Natural killer cell (primary cell): ENCODE measurements at regions of chrX and their contacts with region 1.

Region 1: GRCh38 chrX:115330498-115331168 is 41.1 kb downstream of the LUZP4 start:
- DNase-seq: peak in 1 of 2 donors; percentile 42
- ATAC-seq: peak in 1 of 3 donors; percentile 58
- H3K4me3 ChIP-seq: no peak overlapping the region
- H3K4me3 Mint-ChIP-seq: no peak overlapping the region
- H3K27ac ChIP-seq: no peak overlapping the region
- H3K27ac Mint-ChIP-seq: no peak overlapping the region
- H3K4me1 ChIP-seq: no peaks in the 10 kb centered on the region
- H3K4me1 Mint-ChIP-seq: peaks cover 0 to 5% of the 10 kb centered on the region in 2 donors
- H3K27me3 ChIP-seq: no peaks in the 10 kb centered on the region
- H3K27me3 Mint-ChIP-seq: peaks cover 3 to 40% of the 10 kb centered on the region in 2 donors
- CTCF ChIP-seq: peak; percentile 68

Region 2: GRCh38 chrX:114985967-114986592 is 344.6 kb before region 1 on chrX:
- intact Hi-C with region 1: no loop called
- DNase-seq: no peak
- ATAC-seq: peak in 2 of 3 donors; percentile 78 to 89
- H3K4me3 ChIP-seq: no peak overlapping the region
- H3K4me3 Mint-ChIP-seq: peak overlapping the region; percentile 15
- H3K27ac ChIP-seq: peak overlapping the region; percentile 38
- H3K27ac Mint-ChIP-seq: peak overlapping the region; percentile 81 to 89
- H3K4me1 ChIP-seq: no peaks in the 10 kb centered on the region
- H3K4me1 Mint-ChIP-seq: peaks cover 22% of the 10 kb centered on the region in 2 donors
- H3K27me3 ChIP-seq: no peaks in the 10 kb centered on the region
- H3K27me3 Mint-ChIP-seq: no peaks in the 10 kb centered on the region
- CTCF ChIP-seq: no peak

Region 3: GRCh38 chrX:115642895-115643530 is 312.4 kb after region 1 on chrX:
- intact Hi-C with region 1: loop called (anchors 1 kb)
- DNase-seq: peak in 1 of 2 donors; percentile 57
- ATAC-seq: peak in 2 of 3 donors; percentile 54 to 73
- H3K4me3 ChIP-seq: no peak overlapping the region
- H3K4me3 Mint-ChIP-seq: no peak overlapping the region
- H3K27ac ChIP-seq: no peak overlapping the region
- H3K27ac Mint-ChIP-seq: no peak overlapping the region
- H3K4me1 ChIP-seq: no peaks in the 10 kb centered on the region
- H3K4me1 Mint-ChIP-seq: no peaks in the 10 kb centered on the region
- H3K27me3 ChIP-seq: no peaks in the 10 kb centered on the region
- H3K27me3 Mint-ChIP-seq: peaks cover 0 to 3% of the 10 kb centered on the region in 2 donors
- CTCF ChIP-seq: peak; percentile 81